Vagina (tissue), 2 donors: ENCODE measurements at regions of chr12 and their contacts with region 1.

Region 1: DNA sequence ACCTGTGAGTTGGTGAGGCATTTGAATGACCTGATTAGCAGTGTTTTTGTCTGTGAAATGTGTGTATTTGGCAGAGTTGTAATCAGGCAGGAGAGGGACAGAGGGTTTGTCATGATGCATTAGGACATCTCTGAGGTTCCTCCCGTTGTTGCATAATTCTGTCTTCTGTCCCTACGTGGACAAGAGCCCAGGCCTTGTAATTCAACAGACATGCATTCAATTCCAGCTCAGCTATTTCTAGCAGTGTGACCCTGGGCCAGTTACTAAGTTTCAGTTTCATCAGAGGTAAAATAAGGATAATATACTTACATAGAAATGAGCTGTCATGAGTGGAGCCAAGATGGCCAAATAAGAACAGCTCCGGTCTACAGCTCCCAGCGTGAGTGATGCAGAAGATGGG is 208.6 kb downstream of the SLC38A4 start:
- DNase-seq: no peak
- H3K4me3 ChIP-seq: no peak overlapping the region
- H3K27ac ChIP-seq: peak overlapping the region; percentile 25
- H3K4me1 ChIP-seq: no peaks in the 10 kb centered on the region
- H3K27me3 ChIP-seq: no peaks in the 10 kb centered on the region
- CTCF ChIP-seq: no peak
- POLR2A ChIP-seq: no peak

Region 2: DNA sequence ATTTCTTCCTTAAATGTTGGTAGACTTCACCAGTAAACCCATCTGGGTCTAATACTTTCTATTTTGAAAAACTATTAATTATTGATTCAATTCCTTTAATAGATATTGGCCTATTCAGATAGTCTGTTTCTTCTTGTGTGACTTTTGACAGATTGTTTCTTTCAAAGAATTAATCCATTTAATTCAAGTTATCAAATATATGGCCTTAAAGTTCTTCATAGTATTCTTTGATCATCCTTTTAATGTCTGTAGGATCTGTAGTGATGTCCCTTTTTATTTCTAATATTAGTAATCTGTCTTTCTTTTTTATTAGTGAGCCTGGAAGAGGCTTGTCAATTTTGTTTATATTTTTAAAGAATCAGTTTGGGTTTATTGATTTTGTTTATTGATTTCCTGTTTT is 18.7 kb after region 1 on chr12:
- intact Hi-C with region 1: loop called (anchors 1 kb)
- DNase-seq: no peak
- H3K4me3 ChIP-seq: no peak overlapping the region
- H3K27ac ChIP-seq: no peak overlapping the region
- H3K4me1 ChIP-seq: no peaks in the 10 kb centered on the region
- H3K27me3 ChIP-seq: no peaks in the 10 kb centered on the region
- CTCF ChIP-seq: no peak
- POLR2A ChIP-seq: no peak